Activated B cell treated with CpG ODN at 0.5 μM for 24 hours (primary cell): ENCODE measurements at regions of chr6 and their contacts with region 1.

Region 1: GRCh38 chr6:73653571-73654424 is at the start of gene SLC17A5:
- DNase-seq: peak; percentile 85
- ATAC-seq: peak; percentile 90
- H3K4me3 Mint-ChIP-seq: peak within 1 kb of the TSS; percentile 98
- H3K27ac Mint-ChIP-seq: peak within 1 kb of the TSS; percentile 93
- H3K4me1 Mint-ChIP-seq: peaks cover 21% of the 10 kb centered on the region
- H3K27me3 Mint-ChIP-seq: no peaks in the 10 kb centered on the region
- CTCF ChIP-seq: no peak
- total RNA-seq, gene SLC17A5: 6.3 and 7.5 TPM in 2 replicates

Region 2: GRCh38 chr6:72622094-72622940 is 1031.5 kb before region 1 on chr6:
- CTCF ChIA-PET with region 1: no interaction called
- POLR2A ChIA-PET with region 1: no interaction called
- intact Hi-C with region 1: loop called (anchors 5 kb)
- DNase-seq: peak; percentile 72
- ATAC-seq: peak; percentile 54
- H3K4me3 Mint-ChIP-seq: peak overlapping the region; percentile 96
- H3K27ac Mint-ChIP-seq: peak overlapping the region; percentile 93
- H3K4me1 Mint-ChIP-seq: peaks cover 52% of the 10 kb centered on the region
- H3K27me3 Mint-ChIP-seq: no peaks in the 10 kb centered on the region
- CTCF ChIP-seq: no peak

Region 3: GRCh38 chr6:73309769-73310502 is 343.9 kb before region 1 on chr6:
- CTCF ChIA-PET with region 1: no interaction called
- POLR2A ChIA-PET with region 1: no interaction called
- intact Hi-C with region 1: loop called (anchors 2 kb)
- DNase-seq: peak; percentile 59
- ATAC-seq: peak; percentile 94
- H3K4me3 Mint-ChIP-seq: peak overlapping the region; percentile 97
- H3K27ac Mint-ChIP-seq: peak overlapping the region; percentile 87
- H3K4me1 Mint-ChIP-seq: peaks cover 18% of the 10 kb centered on the region
- H3K27me3 Mint-ChIP-seq: peaks cover 8% of the 10 kb centered on the region
- CTCF ChIP-seq: no peak

Region 4: DNA sequence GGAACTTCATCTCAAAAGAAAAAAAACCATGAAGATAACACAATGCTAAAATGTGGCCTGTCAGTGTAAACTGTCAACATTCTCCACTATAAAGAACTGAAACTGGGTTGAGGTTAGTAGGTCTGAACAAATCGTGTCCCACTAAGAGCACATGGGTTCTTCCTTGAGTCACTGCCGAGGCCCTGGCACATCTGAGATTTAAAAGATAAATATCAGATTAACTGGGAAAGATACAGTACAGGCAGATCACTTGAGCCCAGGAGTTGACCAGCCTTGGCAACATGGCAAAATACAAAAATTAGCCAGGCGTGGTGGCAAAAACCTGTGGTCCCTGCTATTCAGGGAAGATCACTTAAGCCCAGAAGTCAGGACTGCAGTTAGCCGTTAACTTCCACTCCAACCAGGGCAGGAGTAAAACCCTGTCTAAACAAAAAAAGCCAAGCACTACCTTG is 138.6 kb before region 1 on chr6:
- CTCF ChIA-PET with region 1: interaction called, 22 read pairs
- POLR2A ChIA-PET with region 1: interaction called, 110 read pairs
- intact Hi-C with region 1: loop called (anchors 1 kb)
- DNase-seq: no peak
- ATAC-seq: peak; percentile 53
- H3K4me3 Mint-ChIP-seq: peak overlapping the region; percentile 72
- H3K27ac Mint-ChIP-seq: peak overlapping the region; percentile 80
- H3K4me1 Mint-ChIP-seq: peaks cover 70% of the 10 kb centered on the region
- H3K27me3 Mint-ChIP-seq: no peaks in the 10 kb centered on the region
- CTCF ChIP-seq: no peak

Region 5: GRCh38 chr6:73585566-73586415 is 68.0 kb before region 1 on chr6:
- CTCF ChIA-PET with region 1: interaction called, 7 read pairs
- POLR2A ChIA-PET with region 1: interaction called, 19 read pairs
- intact Hi-C with region 1: loop called (anchors 1 kb)
- DNase-seq: no peak
- ATAC-seq: peak; percentile 76
- H3K4me3 Mint-ChIP-seq: peak overlapping the region; percentile 79
- H3K27ac Mint-ChIP-seq: peak overlapping the region; percentile 99
- H3K4me1 Mint-ChIP-seq: peaks cover 38% of the 10 kb centered on the region
- H3K27me3 Mint-ChIP-seq: no peaks in the 10 kb centered on the region
- CTCF ChIP-seq: no peak

Region 6: DNA sequence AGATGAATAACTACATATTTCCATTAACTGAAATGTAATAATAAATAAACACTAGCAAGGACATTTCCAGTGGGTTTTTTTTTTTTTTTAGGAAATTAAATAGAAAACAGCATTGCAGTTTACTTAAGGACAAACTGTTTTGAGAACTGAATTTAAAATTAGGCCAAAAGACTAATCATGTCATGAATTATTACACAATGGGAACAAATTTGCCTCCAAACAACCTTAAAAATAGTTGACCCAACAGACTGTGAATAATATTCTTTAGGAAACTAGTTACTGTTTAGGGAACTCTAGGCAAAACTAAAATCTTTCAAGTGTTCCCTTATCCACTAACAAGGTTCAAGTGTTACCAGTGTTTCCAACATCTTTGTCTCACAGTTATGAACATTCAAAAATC is 1568.5 kb after region 1 on chr6:
- CTCF ChIA-PET with region 1: no interaction called
- POLR2A ChIA-PET with region 1: interaction called, 10 read pairs
- intact Hi-C with region 1: no loop called
- DNase-seq: no peak
- ATAC-seq: no peak
- H3K4me3 Mint-ChIP-seq: no peak overlapping the region
- H3K27ac Mint-ChIP-seq: no peak overlapping the region
- H3K4me1 Mint-ChIP-seq: peaks cover under 1% of the 10 kb centered on the region
- H3K27me3 Mint-ChIP-seq: peaks cover 34% of the 10 kb centered on the region
- CTCF ChIP-seq: no peak

Region 7: GRCh38 chr6:75601304-75602245 is 1947.8 kb after region 1 on chr6 and contains the start of gene SENP6:
- CTCF ChIA-PET with region 1: no interaction called
- POLR2A ChIA-PET with region 1: interaction called, 5 read pairs
- intact Hi-C with region 1: loop called (anchors 1 kb)
- DNase-seq: peak; percentile 78
- ATAC-seq: peak; percentile 79
- H3K4me3 Mint-ChIP-seq: peak within 1 kb of the TSS; percentile 98
- H3K27ac Mint-ChIP-seq: peak within 1 kb of the TSS; percentile 98
- H3K4me1 Mint-ChIP-seq: peaks cover 70% of the 10 kb centered on the region
- H3K27me3 Mint-ChIP-seq: no peaks in the 10 kb centered on the region
- CTCF ChIP-seq: no peak
- total RNA-seq, gene SENP6: 116 and 134 TPM in 2 replicates